H1 (cell line): ENCODE measurements at regions of chr1 and their contacts with region 1.

Region 1: DNA sequence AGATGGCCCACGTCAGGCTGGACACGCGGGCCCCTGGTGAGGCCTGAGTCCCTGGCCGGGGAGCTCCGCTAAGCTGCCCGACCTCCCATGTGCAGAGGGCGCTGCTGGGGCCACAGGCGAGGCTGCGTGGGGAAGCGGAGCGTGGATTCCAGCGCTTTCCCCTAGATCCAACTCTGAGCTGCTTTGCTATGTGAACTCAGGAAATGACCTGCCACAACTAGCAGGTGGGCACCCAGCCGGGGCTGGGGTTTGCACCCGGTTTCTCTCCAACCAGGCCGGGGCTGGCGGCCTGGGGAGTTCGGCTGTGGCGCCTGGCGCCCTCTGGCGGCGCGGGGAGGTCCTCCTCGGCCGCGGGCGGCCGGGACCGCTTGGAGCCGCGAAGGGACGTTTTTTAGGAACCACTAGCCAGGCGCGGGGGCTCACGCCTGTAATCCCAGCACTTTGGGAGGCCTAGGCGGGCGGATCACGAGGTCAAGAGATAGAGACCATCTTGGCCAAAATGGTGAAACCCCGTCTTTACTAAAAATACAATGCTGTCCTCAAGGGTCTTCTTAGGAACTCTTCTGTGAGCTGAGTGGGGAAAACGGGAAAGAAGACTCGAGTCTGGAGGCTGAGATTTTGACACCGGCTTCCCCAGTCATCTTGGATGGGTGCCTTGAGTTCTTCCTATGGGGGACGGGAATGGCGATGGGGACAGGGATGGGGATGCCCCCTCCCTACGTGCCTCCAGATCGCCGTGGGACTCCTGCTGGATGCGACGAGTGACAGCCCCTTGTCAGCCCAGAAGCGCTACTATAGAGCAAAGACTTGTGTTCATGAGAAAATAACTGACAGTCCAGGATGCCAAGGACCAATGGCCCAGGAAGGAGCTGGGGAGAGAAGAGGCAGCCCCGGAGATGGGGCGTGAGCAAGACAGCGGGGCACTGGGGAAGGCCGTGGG is 12.6 kb downstream of the PYCR2 start:
- DNase-seq: peak in 1 of 2 experiments; percentile 94
- H3K4me3 ChIP-seq: no peak overlapping the region
- H3K27ac ChIP-seq: no peak overlapping the region
- H3K4me1 ChIP-seq: peaks cover 0 to 7% (median 1%) of the 10 kb centered on the region in 4 experiments; a peak in 2 of 7 replicates
- H3K27me3 ChIP-seq: no peaks in the 10 kb centered on the region; a peak in 2 of 7 replicates
- CTCF ChIP-seq: peak; percentile 75 to 97 (median 77)
- EP300 ChIP-seq: no peak
- POLR2A ChIP-seq: no peak
- RAD21 ChIP-seq: peak; percentile 86 to 92

Region 2: GRCh38 chr1:225866061-225866837 is 45.2 kb before region 1 on chr1:
- CTCF ChIA-PET with region 1: interaction called, 13 read pairs
- POLR2A ChIA-PET with region 1: interaction called, 3 read pairs
- DNase-seq: no peak
- H3K4me3 ChIP-seq: no peak overlapping the region
- H3K27ac ChIP-seq: no peak overlapping the region; the same call in 1 of the 2 replicates
- H3K4me1 ChIP-seq: no peaks in the 10 kb centered on the region
- H3K27me3 ChIP-seq: no peaks in the 10 kb centered on the region
- CTCF ChIP-seq: no peak
- EP300 ChIP-seq: no peak
- POLR2A ChIP-seq: no peak
- RAD21 ChIP-seq: no peak

Region 3: DNA sequence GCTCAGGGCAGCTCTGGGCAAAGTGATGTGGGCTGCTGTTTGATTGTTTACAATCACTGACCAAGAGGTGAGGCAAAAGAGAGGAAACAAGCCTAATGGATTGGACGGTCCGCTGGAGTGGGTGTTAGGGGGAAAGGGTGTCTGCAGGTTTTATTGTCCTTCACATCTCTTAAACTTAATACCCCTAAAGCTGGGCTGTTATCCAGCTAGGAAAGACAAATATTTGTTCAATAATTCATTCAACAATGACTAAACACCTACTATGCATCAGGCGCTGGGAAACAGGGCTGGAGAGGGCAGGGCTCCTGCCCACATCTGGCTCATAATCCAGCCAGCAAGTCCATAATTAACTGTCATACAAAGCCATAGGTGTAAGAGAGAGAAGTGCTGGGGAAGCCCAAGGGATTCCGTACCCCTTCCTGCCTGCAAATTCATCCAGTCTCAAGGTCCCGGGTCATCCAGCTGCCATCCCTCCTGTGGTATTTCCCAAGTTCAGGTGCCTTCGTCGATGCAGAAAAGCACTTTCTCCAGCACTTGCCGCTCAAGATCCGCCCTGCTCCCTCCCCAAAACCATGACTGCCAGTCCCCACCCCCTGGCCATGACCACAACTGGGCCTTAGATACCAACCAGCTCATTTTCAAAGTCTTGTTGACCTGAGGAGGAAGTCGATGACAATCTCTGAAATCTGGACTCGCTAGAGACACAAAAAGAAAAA is 39.9 kb before region 1 on chr1:
- CTCF ChIA-PET with region 1: interaction called, 406 read pairs
- POLR2A ChIA-PET with region 1: interaction called, 3 read pairs
- DNase-seq: no peak
- H3K4me3 ChIP-seq: no peak overlapping the region
- H3K27ac ChIP-seq: no peak overlapping the region
- H3K4me1 ChIP-seq: peaks cover 0 to 3% (median 0%) of the 10 kb centered on the region in 4 experiments; a peak in 2 of 7 replicates
- H3K27me3 ChIP-seq: no peaks in the 10 kb centered on the region
- CTCF ChIP-seq: no peak
- EP300 ChIP-seq: no peak
- POLR2A ChIP-seq: no peak
- RAD21 ChIP-seq: no peak

Region 4: DNA sequence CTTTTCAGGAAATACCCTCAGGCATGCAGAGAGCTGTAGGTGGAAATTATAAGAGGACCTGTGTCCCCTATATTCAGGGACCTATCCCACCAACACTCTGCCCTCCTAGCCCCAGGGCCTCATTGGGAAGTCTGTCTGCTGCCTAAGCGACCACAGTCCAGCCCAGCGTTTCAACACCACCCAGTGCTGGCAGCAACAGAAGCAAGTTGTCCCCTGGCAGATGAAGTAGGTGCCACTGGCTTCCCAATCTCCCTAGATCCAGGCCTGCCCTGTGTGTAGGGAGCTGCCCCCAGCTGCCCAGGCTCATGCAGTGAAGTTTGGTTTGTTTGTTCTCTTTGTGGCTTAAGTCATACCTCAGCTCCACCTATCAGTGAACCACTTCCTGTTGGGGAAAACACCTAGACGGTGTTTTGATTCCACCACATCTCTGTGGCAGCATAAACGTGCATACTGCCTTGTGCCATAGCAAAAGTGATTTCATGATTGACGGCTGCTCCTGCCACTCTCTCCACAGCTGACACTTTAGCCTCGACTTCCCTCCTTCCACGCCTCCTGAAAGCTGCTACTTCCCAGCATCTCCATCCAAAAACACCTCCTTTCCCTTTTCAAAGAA is 14.4 kb before region 1 on chr1:
- CTCF ChIA-PET with region 1: interaction called, 406 read pairs
- POLR2A ChIA-PET with region 1: interaction called, 4 read pairs
- DNase-seq: no peak
- H3K4me3 ChIP-seq: no peak overlapping the region
- H3K27ac ChIP-seq: no peak overlapping the region
- H3K4me1 ChIP-seq: peaks cover 0 to 21% (median 19%) of the 10 kb centered on the region in 4 experiments; a peak in 6 of 7 replicates
- H3K27me3 ChIP-seq: no peaks in the 10 kb centered on the region
- CTCF ChIP-seq: no peak
- EP300 ChIP-seq: no peak
- POLR2A ChIP-seq: no peak
- RAD21 ChIP-seq: no peak

Region 5: DNA sequence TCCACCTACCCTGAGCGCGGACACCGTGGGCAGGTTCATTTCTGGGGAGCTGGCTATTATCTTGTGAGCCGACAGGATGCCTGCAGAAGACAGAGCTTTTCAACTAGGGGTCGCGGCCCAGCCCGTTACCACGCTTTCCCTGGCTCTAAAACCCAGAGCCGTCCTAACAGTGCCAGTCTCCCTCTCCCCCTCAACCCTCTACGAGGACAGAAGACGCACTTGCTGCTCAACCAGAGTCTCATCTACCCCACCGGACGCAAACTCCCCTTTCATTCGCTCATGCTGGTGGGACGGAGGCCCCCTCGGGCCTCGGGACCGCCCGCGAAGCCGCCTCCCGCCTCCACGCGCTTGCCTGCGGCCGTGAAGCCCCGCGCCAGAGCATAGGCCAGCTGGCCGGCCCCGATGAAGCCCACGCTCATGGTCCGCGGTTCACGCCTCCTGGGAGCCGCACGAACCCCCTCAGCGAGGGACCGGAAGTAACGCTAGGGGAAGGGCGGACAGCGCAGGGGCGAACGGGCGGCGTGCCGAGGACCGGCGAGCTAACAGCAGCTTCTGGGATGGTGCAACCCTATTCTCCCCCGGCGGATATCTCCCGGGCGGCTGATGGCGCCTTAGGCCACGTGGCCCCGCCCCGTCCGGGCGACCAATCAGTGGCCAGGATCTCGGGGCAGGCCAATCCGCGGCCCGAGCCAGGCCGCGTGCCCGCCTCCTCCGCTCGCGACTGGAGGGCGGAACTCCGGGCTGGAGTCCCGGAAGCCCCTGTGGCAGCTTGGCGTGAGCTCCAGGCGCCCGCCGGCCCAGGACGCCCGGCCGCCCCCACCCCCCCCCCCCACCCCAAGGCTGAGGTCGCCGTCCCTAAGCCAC is 12.5 kb after region 1 on chr1 and contains the start of gene PYCR2:
- CTCF ChIA-PET with region 1: interaction called, 17 read pairs
- POLR2A ChIA-PET with region 1: interaction called, 22 read pairs
- DNase-seq: peak; percentile 88 to 92
- H3K4me3 ChIP-seq: peak within 1 kb of the TSS; percentile 91 to 97 (median 93)
- H3K27ac ChIP-seq: peak within 1 kb of the TSS; percentile 69
- H3K4me1 ChIP-seq: peaks cover 0 to 9% (median 5%) of the 10 kb centered on the region in 4 experiments; a peak in 4 of 7 replicates
- H3K27me3 ChIP-seq: no peaks in the 10 kb centered on the region
- CTCF ChIP-seq: peak in 1 of 3 experiments; percentile 7; a peak in 1 of 4 replicates
- EP300 ChIP-seq: no peak
- POLR2A ChIP-seq: peak in 1 of 2 experiments; percentile 87; a peak in 2 of 3 replicates
- RAD21 ChIP-seq: no peak; a peak in 1 of 4 replicates
- total RNA-seq, gene PYCR2: 84.3 and 84.6 TPM in 2 replicates

Region 6: GRCh38 chr1:225944951-225945350 is 33.5 kb after region 1 on chr1:
- CTCF ChIA-PET with region 1: interaction called, 16 read pairs
- POLR2A ChIA-PET with region 1: interaction called, 6 read pairs
- DNase-seq: no peak
- H3K4me3 ChIP-seq: no peak overlapping the region
- H3K27ac ChIP-seq: no peak overlapping the region
- H3K4me1 ChIP-seq: peaks cover 6 to 22% (median 13%) of the 10 kb centered on the region in 4 experiments
- H3K27me3 ChIP-seq: peaks cover 0 to 14% (median 9%) of the 10 kb centered on the region in 4 experiments; a peak in 4 of 7 replicates
- CTCF ChIP-seq: no peak
- EP300 ChIP-seq: no peak
- POLR2A ChIP-seq: no peak
- RAD21 ChIP-seq: no peak